HEK293 (cell line): ENCODE measurements at regions of chr5 and their contacts with region 1.

Region 1: DNA sequence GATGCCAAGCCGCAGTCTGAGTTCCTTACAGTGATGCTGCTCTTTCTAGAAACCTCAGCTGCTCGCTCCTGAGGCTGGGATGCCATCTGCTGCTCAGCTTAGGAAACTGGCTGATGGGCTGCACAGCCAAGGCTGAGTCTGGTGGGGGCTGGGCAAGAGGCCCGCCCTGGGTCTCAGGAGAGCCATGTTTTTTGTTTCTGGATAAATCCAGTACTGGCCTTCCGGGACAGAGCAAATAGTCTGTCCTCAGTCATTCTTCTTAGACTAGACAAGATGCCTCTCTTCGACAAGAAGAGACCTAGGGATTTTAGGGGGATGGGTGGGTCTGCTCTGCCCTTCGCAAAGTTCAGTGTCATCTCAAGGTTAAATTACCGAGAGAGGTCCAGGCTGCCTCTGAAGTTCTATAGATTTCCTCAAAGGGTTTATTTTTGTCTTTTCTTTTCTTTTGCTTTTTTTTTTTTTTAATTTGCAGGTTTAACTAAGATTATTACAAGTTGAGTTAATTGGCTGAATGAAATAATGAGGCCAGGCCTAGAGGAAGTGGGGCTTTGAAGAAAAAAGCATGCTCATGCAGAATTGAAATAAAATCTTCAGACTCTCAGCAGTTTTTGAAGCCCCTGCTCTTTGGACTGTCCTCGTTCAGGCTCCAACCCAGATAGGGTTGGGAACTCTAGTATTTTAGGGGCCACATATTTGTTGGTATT is 30.6 kb upstream of the MATR3 start:
- H3K4me3 ChIP-seq: no peak overlapping the region
- H3K27ac ChIP-seq: no peak overlapping the region
- H3K4me1 ChIP-seq: no peaks in the 10 kb centered on the region
- CTCF ChIP-seq: peak; percentile 96

Region 2: DNA sequence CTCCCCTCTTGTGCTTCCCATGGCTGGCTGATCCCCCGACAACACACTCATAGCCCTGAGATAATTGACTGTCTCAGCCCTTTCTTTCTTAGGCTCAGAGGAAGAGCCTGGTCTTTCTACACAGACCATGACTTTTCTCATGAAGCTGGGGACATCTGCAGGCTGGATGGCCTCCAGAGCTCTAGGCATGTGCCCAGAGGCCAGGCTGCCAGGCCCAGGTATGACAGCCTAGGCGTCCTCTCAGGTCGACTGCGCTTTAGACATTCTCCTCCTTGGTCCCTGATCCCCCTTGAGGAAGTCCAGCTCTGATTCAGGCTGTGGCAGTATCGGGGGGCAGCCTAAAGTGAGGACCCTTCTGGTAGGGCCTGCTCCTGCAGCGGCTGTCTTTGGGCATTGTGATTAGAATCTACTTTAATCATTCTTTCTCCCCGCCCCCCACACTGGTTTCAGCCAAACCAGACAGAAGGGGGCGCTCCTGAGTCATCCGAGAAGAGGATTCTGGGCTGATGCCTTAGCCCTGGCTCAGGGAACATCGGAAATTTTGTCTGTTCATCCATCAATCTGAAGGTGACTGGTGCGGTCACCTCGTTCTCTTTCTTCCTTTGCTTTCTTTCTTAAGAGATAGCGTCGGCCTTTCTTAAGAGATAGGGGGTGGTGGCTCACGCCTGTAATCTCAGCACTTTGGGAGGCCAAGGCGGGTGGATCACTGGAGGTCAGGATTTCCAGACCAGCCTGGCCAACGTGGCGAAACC is 621.2 kb before region 1 on chr5:
- CTCF ChIA-PET with region 1: interaction called, 13 read pairs
- POLR2A ChIA-PET with region 1: no interaction called
- H3K4me3 ChIP-seq: no peak overlapping the region
- H3K27ac ChIP-seq: peak overlapping the region; percentile 25; the same call in 1 of the 2 replicates
- H3K4me1 ChIP-seq: no peaks in the 10 kb centered on the region
- CTCF ChIP-seq: 0 out of 2 replicates have a peak, but pooled peaks have one; percentile 37

Region 3: DNA sequence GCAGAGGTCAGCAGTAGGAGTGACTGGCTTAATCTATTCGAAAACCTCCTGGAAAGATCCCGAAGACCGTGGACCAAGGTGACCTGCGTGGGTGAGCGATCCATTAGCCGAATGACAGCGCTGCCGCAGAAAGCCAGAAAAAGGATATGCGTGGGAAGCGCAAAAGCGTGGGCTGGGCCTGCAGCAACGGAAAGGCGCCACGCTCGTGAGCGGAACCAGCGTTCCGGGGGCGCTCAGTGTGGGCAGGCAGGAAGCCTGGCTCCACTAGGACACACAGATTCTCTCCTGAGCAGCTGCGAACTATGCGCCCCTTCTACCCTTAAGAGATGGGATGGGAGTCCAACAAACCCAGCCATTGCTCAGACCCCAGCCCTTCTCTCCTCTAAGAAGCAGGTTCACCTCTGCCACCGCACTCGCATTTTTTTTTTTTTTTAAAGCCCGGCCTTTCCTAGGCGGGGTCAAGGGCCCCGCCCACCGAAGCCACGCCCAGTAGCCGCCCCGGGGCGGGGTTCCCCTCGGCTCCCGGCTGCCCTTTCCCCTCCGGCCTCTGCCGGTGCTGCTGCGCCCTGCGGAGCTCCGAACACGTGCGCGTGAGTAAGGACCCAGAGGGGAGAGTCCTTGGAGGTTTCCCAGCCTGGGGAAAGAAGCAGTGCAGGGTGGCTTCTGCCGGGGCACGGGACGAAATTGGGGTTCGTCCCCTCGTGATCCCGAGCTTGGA is 10.8 kb after region 1 on chr5:
- CTCF ChIA-PET with region 1: interaction called, 15 read pairs
- POLR2A ChIA-PET with region 1: interaction called, 7 read pairs
- H3K4me3 ChIP-seq: peak overlapping the region; percentile 48
- H3K27ac ChIP-seq: peak overlapping the region; percentile 52
- H3K4me1 ChIP-seq: peaks cover 17% of the 10 kb centered on the region
- CTCF ChIP-seq: peak; percentile 56